WTC11 (cell line): ENCODE measurements at regions of chr4 and their contacts with region 1.

Region 1: DNA sequence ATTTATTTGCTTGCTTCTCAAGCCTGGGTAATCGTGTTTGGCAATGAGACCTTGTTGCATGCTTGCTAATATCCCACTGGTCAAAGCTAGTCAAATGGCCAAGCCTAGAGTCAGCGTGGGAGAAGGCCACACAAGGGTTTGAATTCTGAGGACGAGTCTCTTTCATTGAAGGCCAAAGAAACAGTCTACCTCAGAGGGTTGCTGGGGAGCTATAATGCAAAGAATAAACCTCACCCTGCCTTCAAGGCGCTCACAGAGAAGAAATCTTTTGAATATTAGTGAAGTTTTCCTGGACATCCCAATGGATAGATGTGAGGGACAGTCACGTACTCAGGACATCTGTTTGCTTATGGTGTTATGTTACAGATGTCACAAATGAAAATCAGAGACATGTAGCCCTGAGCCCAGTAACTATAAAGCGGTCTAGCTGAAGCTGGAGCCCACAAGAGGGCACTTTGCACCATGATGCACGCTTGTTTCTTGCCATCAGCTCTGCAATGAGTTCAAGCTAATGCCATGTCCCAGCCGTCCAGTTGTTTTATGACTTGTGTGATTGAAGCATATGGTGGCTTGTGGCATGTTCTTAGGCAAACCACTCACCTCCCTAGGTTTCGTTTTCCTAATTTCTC is 1.1 kb upstream of the TLR3 start:
- DNase-seq: peak; percentile 30
- ATAC-seq: peak; percentile 90
- H3K4me3 Mint-ChIP-seq: no peak overlapping the region
- H3K27ac Mint-ChIP-seq: no peak overlapping the region
- H3K4me1 Mint-ChIP-seq: peaks cover 15% of the 10 kb centered on the region
- H3K27me3 Mint-ChIP-seq: no peaks in the 10 kb centered on the region
- CTCF ChIP-seq: no peak

Region 2: DNA sequence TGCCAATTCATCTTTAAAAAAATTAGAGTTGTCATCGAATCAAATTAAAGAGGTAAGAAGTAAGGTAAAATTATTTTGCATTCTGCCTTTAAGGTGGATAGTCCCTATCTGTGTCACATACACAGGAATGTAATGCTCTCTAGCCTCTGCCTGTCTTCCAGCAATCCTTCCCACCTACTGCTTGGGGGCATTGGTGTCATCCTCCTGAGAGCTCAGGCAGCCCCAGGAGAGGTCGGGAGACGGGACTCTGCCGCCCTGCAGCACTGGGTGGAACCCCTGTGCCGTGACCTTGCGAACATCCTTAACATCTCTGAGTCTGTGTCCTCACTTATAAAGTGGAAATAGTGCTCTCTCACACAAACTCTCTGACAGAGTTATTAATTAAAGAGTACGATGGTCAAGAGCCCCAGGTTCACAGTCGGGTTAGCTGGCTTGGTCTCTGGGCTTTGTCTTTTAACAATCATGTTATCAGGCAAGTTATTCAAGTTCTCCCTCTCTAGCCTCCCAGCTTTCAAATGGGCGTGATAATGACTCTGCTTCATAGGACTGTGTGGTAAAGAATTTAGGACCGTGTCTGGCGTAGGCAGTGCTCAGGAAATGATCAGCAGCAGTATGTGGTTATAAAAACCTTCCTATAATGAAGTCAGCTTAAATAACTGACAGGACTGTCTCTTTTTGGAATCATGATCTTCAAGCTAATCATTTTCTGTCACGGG is 11.3 kb after region 1 on chr4:
- CTCF ChIA-PET with region 1: interaction called, 17 read pairs
- POLR2A ChIA-PET with region 1: interaction called, 6 read pairs
- DNase-seq: peak; percentile 47
- ATAC-seq: peak; percentile 68
- H3K4me3 Mint-ChIP-seq: no peak overlapping the region
- H3K27ac Mint-ChIP-seq: peak overlapping the region; percentile 58
- H3K4me1 Mint-ChIP-seq: peaks cover 40% of the 10 kb centered on the region
- H3K27me3 Mint-ChIP-seq: no peaks in the 10 kb centered on the region; the same call in 1 of the 2 replicates
- CTCF ChIP-seq: no peak